Right cardiac atrium (tissue), 5 donors: ENCODE measurements at regions of chr11 and their contacts with region 1.

Region 1: GRCh38 chr11:128552783-128553661 is 34.3 kb downstream of the ETS1 start:
- DNase-seq: peak in 1 of 3 donors; percentile 35
- ATAC-seq: peak; percentile 17 to 35
- H3K4me3 ChIP-seq: no peak overlapping the region
- H3K27ac ChIP-seq: peak overlapping the region; percentile 15
- H3K4me1 ChIP-seq: peaks cover 12% of the 10 kb centered on the region
- H3K27me3 ChIP-seq: no peaks in the 10 kb centered on the region

Region 2: GRCh38 chr11:128323381-128323780 is 229.6 kb before region 1 on chr11:
- intact Hi-C with region 1: loop called in 1 of 4 experiments (anchors 10 kb)
- DNase-seq: no peak
- ATAC-seq: peak in 1 of 2 donors; percentile 44
- H3K4me3 ChIP-seq: no peak overlapping the region
- H3K27ac ChIP-seq: no peak overlapping the region
- H3K4me1 ChIP-seq: no peaks in the 10 kb centered on the region
- H3K27me3 ChIP-seq: no peaks in the 10 kb centered on the region

Region 3: DNA sequence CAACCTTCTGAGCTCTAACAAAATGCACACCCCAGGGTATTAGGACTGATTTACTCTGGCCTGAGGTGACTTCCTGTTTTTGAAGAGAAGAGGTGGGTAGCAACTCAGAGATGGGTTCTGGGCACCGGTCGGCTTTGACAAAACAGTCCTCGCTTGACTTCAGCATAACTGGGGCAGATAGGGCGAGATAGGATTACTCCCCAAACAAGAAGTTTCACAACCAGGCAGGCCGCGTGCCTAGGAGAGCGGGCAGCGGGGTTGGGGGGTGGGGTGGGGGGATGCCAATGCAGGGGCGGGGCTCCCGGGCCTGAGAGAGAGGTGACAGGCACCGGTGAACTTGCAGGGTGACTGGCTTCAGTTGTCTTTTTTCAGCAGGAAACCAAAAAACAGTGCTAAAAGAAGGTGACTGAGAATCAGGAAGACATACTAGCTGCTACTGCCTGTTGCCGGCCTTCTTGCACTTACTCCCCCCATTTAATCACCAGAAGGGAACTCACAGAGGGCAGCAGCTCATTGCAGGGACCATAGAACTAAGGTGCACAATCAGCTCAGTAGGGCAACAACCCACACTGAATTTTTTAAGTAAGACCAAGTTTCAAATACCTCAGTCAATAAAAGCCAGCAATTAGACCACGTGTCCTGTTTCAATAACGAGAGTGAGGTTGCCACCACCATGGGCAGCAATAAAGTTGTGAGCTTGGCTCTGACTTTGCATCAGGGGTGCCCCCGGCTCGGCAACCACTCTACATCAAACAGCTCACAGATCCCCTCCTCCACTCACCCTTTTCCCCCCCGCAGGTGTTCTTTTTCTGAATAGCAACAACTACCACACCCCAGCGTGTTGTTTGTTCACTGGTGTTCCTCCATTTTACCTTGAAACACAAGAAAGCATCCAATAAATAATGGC is 71.5 kb after region 1 on chr11:
- intact Hi-C with region 1: loop called in 1 of 4 experiments (anchors 10 kb)
- DNase-seq: peak in 1 of 3 donors; percentile 50
- ATAC-seq: no peak
- H3K4me3 ChIP-seq: no peak overlapping the region
- H3K27ac ChIP-seq: no peak overlapping the region
- H3K4me1 ChIP-seq: peaks cover 4% of the 10 kb centered on the region
- H3K27me3 ChIP-seq: no peaks in the 10 kb centered on the region

Region 4: DNA sequence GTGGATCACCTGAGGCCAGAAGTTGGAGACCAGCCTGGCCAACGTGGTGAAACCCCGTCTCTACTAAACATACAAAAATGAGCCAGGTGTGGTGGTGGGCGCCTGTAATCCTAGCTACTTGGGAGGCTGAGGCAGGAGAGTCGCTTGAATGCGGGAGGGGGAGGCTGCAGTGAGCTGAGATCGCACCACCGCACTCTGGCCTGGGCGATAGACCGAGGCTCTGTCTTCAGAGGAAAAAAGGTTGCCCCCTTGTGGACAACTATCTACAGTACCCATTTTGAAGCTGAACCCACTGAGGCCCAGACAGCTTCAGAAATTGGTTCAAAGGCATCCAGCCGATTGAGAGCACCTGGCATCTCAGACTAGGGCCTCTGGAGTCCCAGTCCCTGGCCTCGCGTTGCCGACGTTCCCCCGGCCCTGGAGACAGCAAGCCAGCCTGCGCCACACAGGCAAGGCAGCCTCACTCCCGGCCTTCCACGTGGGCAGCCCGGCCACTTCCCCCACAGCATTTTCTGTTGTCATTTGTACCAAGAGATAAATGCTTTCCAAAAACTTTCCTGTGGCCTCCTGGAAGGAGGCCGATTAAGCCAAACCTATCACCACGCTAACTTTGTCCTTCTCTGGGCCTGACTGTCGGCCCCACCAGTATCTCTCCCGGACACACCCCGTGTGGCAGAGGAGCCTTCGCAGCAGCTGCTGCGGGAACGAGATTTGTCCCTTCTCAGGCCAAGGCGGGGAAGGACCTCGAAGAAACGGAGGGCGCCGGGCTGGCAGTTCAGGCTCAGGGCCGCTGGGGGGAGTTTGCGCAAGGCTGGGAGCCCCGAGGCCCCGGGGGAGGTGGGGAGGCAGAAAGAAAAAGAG is 223.6 kb after region 1 on chr11:
- intact Hi-C with region 1: no loop called
- DNase-seq: peak; percentile 77 to 92 (median 92)
- ATAC-seq: peak; percentile 77
- H3K4me3 ChIP-seq: no peak overlapping the region
- H3K27ac ChIP-seq: no peak overlapping the region
- H3K4me1 ChIP-seq: peaks cover 11% of the 10 kb centered on the region
- H3K27me3 ChIP-seq: no peaks in the 10 kb centered on the region